Sigmoid colon (tissue), 7 donors: ENCODE measurements at regions of chr4 and their contacts with region 1.

Region 1: GRCh38 chr4:112765317-112765975 is 128.5 kb downstream of the LARP7 start:
- DNase-seq: no peak
- H3K4me3 ChIP-seq: no peak overlapping the region
- H3K27ac ChIP-seq: no peak overlapping the region
- H3K4me1 ChIP-seq: no peaks in the 10 kb centered on the region
- H3K27me3 ChIP-seq: no peaks in the 10 kb centered on the region
- CTCF ChIP-seq: peak in 3 of 4 experiments; percentile 10 to 25 (median 12)
- EP300 ChIP-seq: no peak
- POLR2A ChIP-seq: no peak

Region 2: DNA sequence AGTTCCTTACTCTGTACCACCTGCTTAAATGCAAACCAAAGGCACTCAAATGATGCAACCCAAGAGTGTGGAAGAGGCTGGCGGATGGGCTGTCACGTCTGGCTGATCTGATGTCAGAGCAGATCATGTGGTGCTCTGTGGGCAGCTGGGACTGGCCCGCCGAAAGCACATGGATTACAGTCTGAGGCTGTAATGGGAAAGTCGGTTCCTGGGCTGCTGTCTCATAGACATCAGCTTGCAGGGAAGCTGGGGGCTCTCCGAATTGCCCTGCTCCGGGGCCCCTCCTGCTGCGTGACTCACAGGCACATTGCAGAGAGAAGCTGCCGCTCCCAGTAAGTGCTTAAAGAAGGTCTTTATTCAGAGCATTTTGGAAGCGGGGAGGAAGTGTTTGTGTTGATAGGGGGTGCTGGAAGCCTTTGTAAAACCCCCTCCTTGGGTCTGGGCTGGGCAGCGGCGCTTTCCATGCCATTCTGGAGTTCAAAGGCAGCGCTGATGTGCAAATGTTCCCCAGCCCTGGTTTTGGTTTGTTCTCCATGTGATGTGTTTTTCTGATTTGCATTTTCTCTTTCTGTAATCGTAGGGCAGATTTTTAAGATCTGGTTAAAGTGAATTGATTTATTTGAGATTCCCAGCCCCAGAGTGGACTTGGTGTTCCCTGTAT is 52.6 kb after region 1 on chr4:
- intact Hi-C with region 1: loop called (anchors 5 kb)
- DNase-seq: peak; percentile 89
- H3K4me3 ChIP-seq: peak overlapping the region; percentile 45 to 66 (median 54)
- H3K27ac ChIP-seq: peak overlapping the region; percentile 63 to 82 (median 74)
- H3K4me1 ChIP-seq: peaks cover 0 to 15% (median 5%) of the 10 kb centered on the region in 4 donors
- H3K27me3 ChIP-seq: no peaks in the 10 kb centered on the region
- CTCF ChIP-seq: no peak
- EP300 ChIP-seq: no peak
- POLR2A ChIP-seq: peak in 1 of 2 donors; percentile 26

Region 3: DNA sequence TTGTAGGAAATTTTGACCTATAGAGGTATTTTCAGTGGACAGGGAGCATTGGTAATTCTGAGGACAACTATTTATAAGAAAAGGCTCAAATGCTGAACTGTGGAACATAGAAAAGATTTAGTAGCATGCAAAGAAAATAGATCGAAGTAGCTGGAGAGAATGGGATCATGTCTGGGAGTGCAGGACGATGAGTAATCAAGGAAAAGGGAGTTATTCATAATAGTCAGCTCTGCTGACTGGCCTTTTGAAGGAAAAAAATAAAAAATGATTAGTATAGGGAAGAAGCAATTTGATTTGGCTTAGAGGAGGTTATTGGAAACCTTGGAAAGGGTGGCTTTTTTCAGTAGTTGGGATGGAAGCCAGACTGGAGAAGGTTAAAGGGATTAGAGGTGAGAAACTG is 261.1 kb after region 1 on chr4:
- intact Hi-C with region 1: no loop called
- DNase-seq: no peak
- H3K4me3 ChIP-seq: peak overlapping the region in 1 of 4 donors; percentile 8
- H3K27ac ChIP-seq: no peak overlapping the region
- H3K4me1 ChIP-seq: no peaks in the 10 kb centered on the region
- H3K27me3 ChIP-seq: no peaks in the 10 kb centered on the region
- CTCF ChIP-seq: no peak
- EP300 ChIP-seq: no peak
- POLR2A ChIP-seq: no peak